CD14-positive monocyte (primary cell): ENCODE measurements at regions of chr10 and their contacts with region 1.

Region 1: DNA sequence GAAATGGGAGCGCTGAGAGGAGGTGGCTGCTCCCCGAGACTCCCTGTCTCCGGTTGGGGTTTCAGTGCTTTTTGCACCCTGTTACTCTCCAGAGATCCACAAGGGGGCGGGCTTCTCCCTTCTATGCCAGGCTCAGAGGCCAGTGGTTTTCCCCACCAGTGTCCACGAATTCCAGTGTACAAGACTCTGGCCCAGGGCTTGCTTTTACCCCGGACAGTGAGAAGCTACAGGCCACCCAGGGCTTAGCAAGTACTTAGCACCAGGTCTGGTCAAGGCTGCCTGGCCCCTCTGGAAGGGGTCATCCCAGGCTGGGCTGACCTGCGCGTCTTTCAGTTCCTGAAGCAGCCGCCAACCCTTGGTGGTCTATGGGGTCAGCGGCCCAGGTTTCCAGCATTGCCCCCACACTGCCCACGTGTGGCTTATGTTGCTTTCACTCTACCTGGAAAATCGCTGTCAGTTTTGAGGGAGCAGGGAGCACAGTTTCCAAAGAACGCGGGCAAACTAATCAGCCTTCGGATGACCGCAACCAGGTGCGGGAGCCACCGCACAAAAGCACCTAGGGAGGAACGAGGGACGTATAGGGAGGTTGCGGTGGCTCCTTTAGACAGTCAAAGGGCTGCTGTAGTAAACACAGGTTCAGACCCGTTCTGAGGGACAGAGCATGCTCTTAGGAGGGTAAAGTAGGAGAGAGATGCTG is 6.8 kb downstream of the CYP26A1 start:
- DNase-seq: peak; percentile 32 to 47 (median 46)
- H3K4me3 ChIP-seq: no peak overlapping the region
- H3K4me3 Mint-ChIP-seq: peak overlapping the region in 1 of 2 donors; percentile 67
- H3K27ac ChIP-seq: no peak overlapping the region
- H3K27ac Mint-ChIP-seq: no peak overlapping the region
- H3K4me1 ChIP-seq: peaks cover 0 to 3% of the 10 kb centered on the region in 2 donors
- H3K4me1 Mint-ChIP-seq: peaks cover 6% of the 10 kb centered on the region
- H3K27me3 ChIP-seq: peaks cover 31 to 40% of the 10 kb centered on the region in 2 donors
- H3K27me3 Mint-ChIP-seq: peaks cover 32 to 58% (median 54%) of the 10 kb centered on the region in 3 donors
- CTCF ChIP-seq: peak; percentile 96

Region 2: DNA sequence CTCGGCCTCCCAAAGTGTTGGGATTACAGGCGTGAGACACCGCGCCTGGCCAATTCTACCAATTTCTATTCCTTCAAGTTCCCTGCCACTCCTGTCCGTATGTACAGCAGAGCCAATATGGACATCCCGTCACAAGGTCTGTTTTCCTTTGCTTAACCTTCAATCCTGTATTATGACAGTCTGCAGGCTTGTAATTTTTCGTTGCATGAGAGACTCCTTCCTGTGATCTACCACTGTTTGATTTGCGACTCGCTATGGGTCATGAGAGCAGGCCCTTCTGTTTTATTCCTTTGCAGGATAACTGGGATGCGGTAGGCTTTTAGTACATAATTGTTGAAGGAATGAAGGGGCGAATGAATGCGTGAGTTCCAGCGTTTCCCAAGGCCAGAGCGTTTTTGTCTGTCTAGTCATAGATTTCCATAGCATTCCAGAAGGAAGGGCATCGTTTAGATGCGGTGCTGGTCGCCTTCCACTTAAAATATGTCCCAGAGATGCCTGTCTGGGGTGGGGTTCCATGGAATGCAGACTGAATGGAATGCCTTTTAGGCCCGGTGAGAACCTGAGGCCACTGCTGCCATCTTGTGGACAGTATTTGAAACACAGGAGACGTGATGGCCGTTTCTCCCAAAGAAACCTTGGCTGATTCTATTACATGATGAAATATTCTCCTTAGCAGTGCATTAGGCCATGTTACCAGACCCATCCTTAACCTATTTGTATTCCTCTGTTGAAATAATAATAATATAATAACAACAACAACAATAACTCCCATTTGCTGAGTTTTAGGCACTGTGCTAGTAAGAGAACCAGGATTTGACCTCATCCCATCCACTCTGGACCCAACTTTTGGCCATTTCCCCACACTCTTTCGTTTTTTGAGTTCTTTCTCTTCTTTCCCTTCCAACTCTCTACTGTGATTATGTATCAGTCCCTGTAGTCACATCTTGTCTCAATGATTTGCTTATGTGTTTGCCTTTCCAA is 208.4 kb after region 1 on chr10:
- intact Hi-C with region 1: loop called (anchors 2 to 5 kb)
- DNase-seq: peak; percentile 36 to 60 (median 55)
- H3K4me3 ChIP-seq: no peak overlapping the region
- H3K4me3 Mint-ChIP-seq: no peak overlapping the region
- H3K27ac ChIP-seq: no peak overlapping the region
- H3K27ac Mint-ChIP-seq: no peak overlapping the region
- H3K4me1 ChIP-seq: peaks cover 6 to 8% of the 10 kb centered on the region in 2 donors
- H3K4me1 Mint-ChIP-seq: peaks cover 14% of the 10 kb centered on the region
- H3K27me3 ChIP-seq: no peaks in the 10 kb centered on the region
- H3K27me3 Mint-ChIP-seq: peaks cover 0 to 11% (median 0%) of the 10 kb centered on the region in 3 donors
- CTCF ChIP-seq: peak; percentile 91

Region 3: GRCh38 chr10:93352638-93353383 is 272.3 kb after region 1 on chr10:
- intact Hi-C with region 1: loop called (anchors 2 to 5 kb)
- DNase-seq: peak in 2 of 3 donors; percentile 16 to 32
- H3K4me3 ChIP-seq: no peak overlapping the region
- H3K4me3 Mint-ChIP-seq: no peak overlapping the region
- H3K27ac ChIP-seq: no peak overlapping the region
- H3K27ac Mint-ChIP-seq: no peak overlapping the region
- H3K4me1 ChIP-seq: no peaks in the 10 kb centered on the region
- H3K4me1 Mint-ChIP-seq: peaks cover 2% of the 10 kb centered on the region
- H3K27me3 ChIP-seq: no peaks in the 10 kb centered on the region
- H3K27me3 Mint-ChIP-seq: peaks cover 0 to 3% (median 2%) of the 10 kb centered on the region in 3 donors
- CTCF ChIP-seq: peak; percentile 87